ENCODE measurements at regions of chr2 and their contacts with region 1.

Region 1: DNA sequence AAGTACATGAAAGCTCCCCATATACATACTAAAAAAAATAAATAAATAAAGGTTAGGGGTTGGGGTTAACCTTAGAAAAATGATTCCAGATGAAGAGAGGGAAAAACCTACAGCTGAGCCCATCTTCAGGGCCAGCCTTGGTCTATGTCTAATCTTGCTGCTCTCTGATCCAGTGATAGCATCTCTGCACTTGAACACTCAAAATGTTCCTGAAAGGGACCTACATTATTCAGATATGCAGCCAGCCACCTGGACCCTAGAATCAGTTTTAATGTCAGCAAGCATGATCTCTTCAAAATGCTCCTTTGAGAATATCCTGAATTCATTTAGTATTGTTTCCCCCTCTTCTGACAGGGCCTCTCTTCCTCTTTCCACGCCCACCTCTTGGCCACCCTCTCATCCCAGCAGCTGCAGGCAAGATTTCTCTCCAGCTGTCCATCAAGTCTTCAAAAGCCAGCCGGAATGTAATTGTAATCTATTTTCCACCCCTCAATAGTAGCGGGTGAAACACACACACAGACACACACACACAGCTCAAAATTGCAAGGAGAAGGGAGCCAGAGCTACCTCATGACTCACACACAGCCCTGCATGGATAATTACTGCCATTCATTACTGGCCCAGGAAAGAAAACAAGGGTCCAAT is 135.5 kb downstream of the MYO3B start:
- DNase-seq: peak; percentile 81
- H3K4me3 ChIP-seq: no peak overlapping the region
- H3K27ac ChIP-seq: no peak overlapping the region
- H3K4me1 ChIP-seq: peaks cover 12% of the 10 kb centered on the region
- H3K27me3 ChIP-seq: no peaks in the 10 kb centered on the region
- CTCF ChIP-seq: no peak

Region 2: DNA sequence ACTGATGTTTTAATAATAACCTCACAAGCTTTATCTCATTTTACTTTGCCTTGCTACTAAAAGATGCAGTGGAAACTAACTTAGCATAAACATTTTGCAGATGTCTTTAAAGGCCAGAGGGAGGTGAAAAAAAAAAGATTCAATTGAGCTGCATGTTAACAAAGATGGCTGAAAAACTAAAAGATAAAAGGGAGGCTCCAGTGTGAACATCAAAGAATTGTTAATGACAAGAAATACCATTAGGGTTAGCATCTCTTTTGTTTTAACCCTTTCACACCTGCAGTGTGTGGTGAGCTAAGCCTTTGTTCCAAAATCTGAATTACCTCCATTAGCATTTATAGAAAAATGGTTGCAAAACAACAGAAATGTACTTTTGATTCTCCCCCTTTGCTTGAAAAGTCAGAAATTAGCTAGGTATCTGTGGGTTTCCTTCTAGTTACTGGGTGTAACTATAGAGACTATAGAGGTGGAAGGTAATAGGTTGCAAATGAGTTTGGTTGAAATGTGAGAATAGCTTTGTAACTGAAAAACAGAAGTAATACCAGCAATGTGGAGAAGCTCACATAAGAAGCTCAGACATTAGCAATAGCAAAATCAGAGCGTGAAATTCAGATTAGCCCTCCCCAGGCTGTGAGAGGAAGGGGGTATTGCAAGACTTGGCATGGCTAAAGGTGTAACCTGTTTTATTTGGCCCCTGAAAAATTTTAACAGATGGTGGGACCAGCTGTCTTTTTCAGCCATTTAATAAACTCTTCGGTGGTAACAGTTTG is 366.9 kb after region 1 on chr2:
- CTCF ChIA-PET with region 1: no interaction called
- POLR2A ChIA-PET with region 1: interaction called, 16 read pairs
- intact Hi-C with region 1: no loop called
- DNase-seq: no peak
- H3K4me3 ChIP-seq: no peak overlapping the region
- H3K27ac ChIP-seq: no peak overlapping the region
- H3K4me1 ChIP-seq: peaks cover 11% of the 10 kb centered on the region
- H3K27me3 ChIP-seq: peaks cover 29% of the 10 kb centered on the region
- CTCF ChIP-seq: no peak